CD8-positive, alpha-beta T cell (primary cell): ENCODE measurements at regions of chr6 and their contacts with region 1.

Region 1: GRCh38 chr6:35452186-35453090 is at the start of gene FANCE:
- DNase-seq: peak; percentile 62 to 91 (median 90)
- ATAC-seq: peak; percentile 81
- H3K4me3 ChIP-seq: peak within 1 kb of the TSS; percentile 64 to 86
- H3K4me3 Mint-ChIP-seq: peak within 1 kb of the TSS; percentile 85
- H3K27ac ChIP-seq: peak within 1 kb of the TSS; percentile 28 to 47
- H3K27ac Mint-ChIP-seq: peak within 1 kb of the TSS; percentile 77
- H3K4me1 ChIP-seq: peaks cover 25% of the 10 kb centered on the region
- H3K4me1 Mint-ChIP-seq: peaks cover 22% of the 10 kb centered on the region
- H3K27me3 ChIP-seq: no peaks in the 10 kb centered on the region
- H3K27me3 Mint-ChIP-seq: no peaks in the 10 kb centered on the region
- CTCF ChIP-seq: no peak
- total RNA-seq, gene FANCE: 1.1 to 1.2 TPM

Region 2: DNA sequence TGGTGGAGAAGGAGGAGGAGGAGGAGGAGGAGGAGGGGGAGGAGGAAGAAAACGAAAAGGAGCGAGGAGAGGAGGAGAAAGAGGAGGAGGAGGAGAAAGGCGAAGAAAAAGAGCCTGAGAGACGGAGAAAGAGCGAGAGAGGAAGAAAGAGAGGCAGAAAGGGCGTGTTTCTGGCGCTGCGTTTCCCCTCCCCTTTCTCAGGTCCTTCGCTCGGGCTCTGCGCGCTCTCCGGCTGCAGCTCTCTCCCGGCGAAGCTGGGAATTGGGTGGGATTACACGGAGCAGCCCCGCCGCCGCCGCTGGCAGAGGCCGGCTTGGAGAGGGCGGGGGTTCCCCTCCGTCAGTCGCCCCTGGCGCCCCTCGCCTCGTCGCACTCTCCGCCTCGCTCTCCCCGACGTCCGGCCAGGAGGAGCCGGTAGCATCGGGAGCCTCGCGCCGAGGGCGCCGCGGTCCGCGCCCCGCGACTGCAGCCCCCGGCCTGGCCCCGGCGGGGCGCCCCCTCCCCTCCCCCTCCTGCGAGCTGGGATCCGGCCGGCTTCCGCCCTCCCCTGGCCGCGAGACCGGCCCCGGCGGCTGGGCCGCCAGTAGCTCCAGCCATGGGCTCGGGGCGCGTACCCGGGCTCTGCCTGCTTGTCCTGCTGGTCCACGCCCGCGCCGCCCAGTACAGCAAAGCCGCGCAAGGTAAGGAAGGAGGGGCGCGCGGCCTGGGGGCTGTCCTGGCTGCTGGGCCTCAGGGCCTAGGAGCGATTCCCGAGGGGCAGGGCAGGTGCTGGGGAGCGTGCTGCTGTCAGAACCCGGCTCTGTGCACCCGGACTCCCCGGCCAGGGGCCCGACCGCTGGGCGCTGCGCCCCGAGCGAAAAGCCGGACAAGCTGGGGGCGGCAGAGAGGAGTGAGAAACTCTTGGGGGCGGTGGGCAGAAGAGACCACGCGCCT is 238.3 kb before region 1 on chr6 and contains the start of gene SCUBE3:
- CTCF ChIA-PET with region 1: no interaction called
- POLR2A ChIA-PET with region 1: no interaction called
- intact Hi-C with region 1: no loop called
- DNase-seq: peak in 2 of 9 experiments; percentile 20 to 35
- ATAC-seq: no peak
- H3K4me3 ChIP-seq: peak within 1 kb of the TSS; percentile 41 to 45
- H3K4me3 Mint-ChIP-seq: peak within 1 kb of the TSS; percentile 63
- H3K27ac ChIP-seq: no peak within 1 kb of the TSS
- H3K27ac Mint-ChIP-seq: no peak within 1 kb of the TSS
- H3K4me1 ChIP-seq: peaks cover 4% of the 10 kb centered on the region
- H3K4me1 Mint-ChIP-seq: peaks cover 10% of the 10 kb centered on the region
- H3K27me3 ChIP-seq: peaks cover 13 to 31% of the 10 kb centered on the region in 2 experiments
- H3K27me3 Mint-ChIP-seq: peaks cover 64% of the 10 kb centered on the region
- CTCF ChIP-seq: no peak
- total RNA-seq, gene SCUBE3: not detected

Region 3: GRCh38 chr6:35327349-35328027 is 125.0 kb before region 1 on chr6:
- CTCF ChIA-PET with region 1: interaction called, 33 read pairs
- POLR2A ChIA-PET with region 1: interaction called, 4 read pairs
- intact Hi-C with region 1: loop called (anchors 1 kb)
- DNase-seq: peak; percentile 61 to 86 (median 82)
- ATAC-seq: peak; percentile 81
- H3K4me3 ChIP-seq: no peak overlapping the region
- H3K4me3 Mint-ChIP-seq: peak overlapping the region; percentile 42
- H3K27ac ChIP-seq: peak overlapping the region in 1 of 2 experiments; percentile 62
- H3K27ac Mint-ChIP-seq: peak overlapping the region; percentile 88
- H3K4me1 ChIP-seq: peaks cover 19% of the 10 kb centered on the region
- H3K4me1 Mint-ChIP-seq: peaks cover 21% of the 10 kb centered on the region
- H3K27me3 ChIP-seq: no peaks in the 10 kb centered on the region
- H3K27me3 Mint-ChIP-seq: no peaks in the 10 kb centered on the region
- CTCF ChIP-seq: peak; percentile 68

Region 4: GRCh38 chr6:35419417-35419816 is 33.0 kb before region 1 on chr6:
- CTCF ChIA-PET with region 1: interaction called, 44 read pairs
- POLR2A ChIA-PET with region 1: interaction called, 4 read pairs
- intact Hi-C with region 1: loop called in 1 of 2 experiments (anchors 1 kb)
- DNase-seq: peak in 3 of 9 experiments; percentile 21 to 57 (median 43)
- ATAC-seq: peak; percentile 56
- H3K4me3 ChIP-seq: no peak overlapping the region
- H3K4me3 Mint-ChIP-seq: peak overlapping the region; percentile 35
- H3K27ac ChIP-seq: peak overlapping the region in 1 of 2 experiments; percentile 21
- H3K27ac Mint-ChIP-seq: peak overlapping the region; percentile 74
- H3K4me1 ChIP-seq: peaks cover 30% of the 10 kb centered on the region
- H3K4me1 Mint-ChIP-seq: peaks cover 31% of the 10 kb centered on the region
- H3K27me3 ChIP-seq: no peaks in the 10 kb centered on the region
- H3K27me3 Mint-ChIP-seq: no peaks in the 10 kb centered on the region
- CTCF ChIP-seq: no peak

Region 5: DNA sequence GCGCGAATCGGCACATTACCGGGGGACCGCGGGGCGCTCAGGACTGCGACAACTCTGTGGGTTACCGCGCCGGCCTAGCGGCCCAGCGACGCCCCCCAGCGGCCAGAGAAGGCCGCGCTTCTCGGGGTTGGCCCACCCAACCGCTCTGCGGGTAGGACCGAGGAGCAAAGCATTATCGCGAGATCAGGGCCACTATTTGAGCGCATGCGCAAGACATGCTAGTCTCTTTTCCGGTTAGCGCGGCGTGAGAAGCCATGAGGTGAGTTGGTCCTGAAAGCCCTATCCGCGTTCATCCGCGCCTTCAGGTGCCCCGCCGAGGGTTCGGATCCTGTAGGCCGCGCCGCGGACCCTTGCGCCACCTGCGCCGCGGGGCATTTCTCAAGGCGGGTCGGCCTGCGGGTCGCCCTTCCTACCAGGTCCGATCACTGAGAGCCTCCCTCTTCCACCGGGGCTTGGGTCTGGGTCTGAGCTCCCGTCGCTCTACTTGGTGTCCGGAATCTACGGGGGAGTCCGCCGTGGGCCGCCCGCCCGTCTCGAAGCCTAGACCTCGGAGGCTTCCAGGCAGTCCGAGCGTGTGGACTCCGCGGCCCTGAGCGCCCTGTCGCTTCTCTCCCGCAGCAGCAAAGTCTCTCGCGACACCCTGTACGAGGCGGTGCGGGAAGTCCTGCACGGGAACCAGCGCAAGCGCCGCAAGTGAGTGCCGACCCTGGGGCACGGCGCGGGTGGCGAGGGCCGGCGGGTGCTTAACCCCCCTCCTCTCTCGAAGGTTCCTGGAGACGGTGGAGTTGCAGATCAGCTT is 15.9 kb after region 1 on chr6 and contains the start of gene RPL10A:
- CTCF ChIA-PET with region 1: interaction called, 93 read pairs
- POLR2A ChIA-PET with region 1: interaction called, 12 read pairs
- intact Hi-C with region 1: loop called (anchors 1 kb)
- DNase-seq: peak; percentile 90 to 99 (median 96)
- ATAC-seq: peak; percentile 88
- H3K4me3 ChIP-seq: peak within 1 kb of the TSS; percentile 74 to 100
- H3K4me3 Mint-ChIP-seq: peak within 1 kb of the TSS; percentile 96
- H3K27ac ChIP-seq: peak within 1 kb of the TSS; percentile 76 to 90
- H3K27ac Mint-ChIP-seq: peak within 1 kb of the TSS; percentile 99
- H3K4me1 ChIP-seq: peaks cover 26% of the 10 kb centered on the region
- H3K4me1 Mint-ChIP-seq: peaks cover 39% of the 10 kb centered on the region
- H3K27me3 ChIP-seq: no peaks in the 10 kb centered on the region
- H3K27me3 Mint-ChIP-seq: no peaks in the 10 kb centered on the region
- CTCF ChIP-seq: peak; percentile 90
- total RNA-seq, gene RPL10A: 2,275 to 2,367 TPM

Region 6: DNA sequence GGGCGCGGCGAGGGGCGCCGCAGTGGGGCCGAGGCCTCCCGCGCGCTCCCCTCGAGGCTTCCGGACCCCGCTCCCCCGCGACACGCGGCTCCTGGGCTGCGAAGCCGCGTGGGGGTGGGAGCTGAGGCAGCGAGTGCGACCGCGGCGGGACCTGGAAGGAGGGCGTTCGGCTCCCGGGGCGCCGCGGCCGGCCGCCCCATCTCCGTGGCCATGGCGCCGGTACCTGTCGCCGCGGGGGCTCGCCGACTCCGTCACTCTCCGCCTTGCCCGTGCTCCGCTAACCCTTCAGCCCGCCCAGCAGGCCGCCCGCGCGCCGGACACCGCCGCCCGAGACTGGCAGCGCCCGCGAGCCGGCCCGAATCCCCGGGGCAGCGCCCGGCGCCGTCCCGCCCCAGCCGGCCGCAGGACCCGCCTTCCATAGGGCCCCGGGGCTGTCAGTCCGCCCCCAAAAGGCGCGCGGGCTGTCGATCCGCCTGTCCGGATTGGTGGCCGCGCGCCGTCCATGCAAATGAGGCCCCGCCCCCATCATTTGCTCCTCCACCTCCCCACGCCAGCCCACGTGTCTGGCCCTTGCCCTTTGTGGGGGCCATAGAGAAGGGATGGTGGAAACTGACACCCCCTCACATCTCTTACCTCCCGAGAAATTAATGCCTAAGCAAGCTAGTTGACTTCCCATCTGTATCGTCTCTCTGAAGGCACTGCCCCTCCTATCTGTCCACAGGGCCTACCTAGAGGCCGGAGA is 236.3 kb after region 1 on chr6 and contains the start of gene FKBP5:
- CTCF ChIA-PET with region 1: no interaction called
- POLR2A ChIA-PET with region 1: no interaction called
- intact Hi-C with region 1: loop called in 1 of 2 experiments (anchors 2 kb)
- DNase-seq: peak; percentile 65 to 93 (median 87)
- ATAC-seq: peak; percentile 87
- H3K4me3 ChIP-seq: peak within 1 kb of the TSS; percentile 63 to 85
- H3K4me3 Mint-ChIP-seq: peak within 1 kb of the TSS; percentile 98
- H3K27ac ChIP-seq: peak within 1 kb of the TSS; percentile 48 to 64
- H3K27ac Mint-ChIP-seq: peak within 1 kb of the TSS; percentile 96
- H3K4me1 ChIP-seq: peaks cover 14% of the 10 kb centered on the region
- H3K4me1 Mint-ChIP-seq: peaks cover 17% of the 10 kb centered on the region
- H3K27me3 ChIP-seq: no peaks in the 10 kb centered on the region
- H3K27me3 Mint-ChIP-seq: no peaks in the 10 kb centered on the region
- CTCF ChIP-seq: no peak
- total RNA-seq, gene FKBP5: 25.7 to 27.1 TPM